GM12878 (cell line): ENCODE measurements at regions of chr1 and their contacts with region 1.

Region 1: DNA sequence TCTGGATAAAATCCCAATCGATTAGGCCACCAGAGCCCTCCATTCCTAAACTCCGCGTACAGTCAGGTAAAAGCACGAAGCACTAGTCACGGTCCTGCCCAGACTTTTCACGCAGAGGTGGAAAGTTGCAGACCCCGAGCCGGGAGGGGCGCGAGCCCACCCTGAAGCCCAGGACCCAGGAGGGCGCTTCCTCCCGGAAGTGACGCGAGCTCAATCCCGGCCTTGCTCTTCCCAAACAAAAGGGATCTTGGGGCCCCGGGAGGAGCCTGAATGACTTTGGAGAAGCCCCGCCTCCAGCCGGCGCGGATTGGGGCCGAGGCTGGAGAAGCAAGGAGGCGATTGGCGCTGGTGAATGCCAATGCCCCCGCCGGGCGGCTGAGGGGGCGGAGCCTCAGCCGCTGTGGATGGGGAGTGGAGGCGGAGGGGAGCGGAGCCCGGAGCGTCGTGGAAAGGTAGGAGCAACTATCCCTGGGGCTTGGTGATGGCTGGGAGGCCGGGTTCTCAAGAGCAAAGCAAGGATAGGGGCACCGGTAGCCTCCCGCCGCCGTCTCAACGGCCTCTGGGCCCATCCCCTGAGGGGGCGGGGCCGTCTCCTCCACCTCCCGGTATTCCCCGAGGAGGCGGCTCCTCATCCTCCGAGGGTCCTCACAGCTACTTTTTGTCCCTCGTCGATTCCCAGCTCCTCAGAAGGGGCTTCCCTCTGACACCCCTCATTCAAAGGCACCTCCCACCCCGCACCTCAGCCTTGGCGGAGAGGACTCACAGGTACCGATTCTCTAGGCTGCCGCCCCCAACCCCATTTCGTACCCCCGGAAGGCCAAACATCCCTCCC is at the start of gene CTTNBP2NL:
- DNase-seq: no peak
- ATAC-seq: peak; percentile 85
- H3K4me3 ChIP-seq: peak within 1 kb of the TSS; percentile 97
- H3K27ac ChIP-seq: peak within 1 kb of the TSS; percentile 78
- H3K4me1 ChIP-seq: peaks cover 18% of the 10 kb centered on the region
- H3K27me3 ChIP-seq: no peaks in the 10 kb centered on the region
- CTCF ChIP-seq: no peak
- EP300 ChIP-seq: no peak
- POLR2A ChIP-seq: peak; percentile 28; the same call in 1 of the 2 replicates
- RAD21 ChIP-seq: no peak
- polyA plus RNA-seq, gene CTTNBP2NL: 2.1 to 5.7 TPM

Region 2: GRCh38 chr1:112196731-112197130 is 199.3 kb before region 1 on chr1:
- CTCF ChIA-PET with region 1: no interaction called
- POLR2A ChIA-PET with region 1: no interaction called
- RAD21 ChIA-PET with region 1: no interaction called
- SMC1A ChIA-PET with region 1: no interaction called
- in situ Hi-C with region 1: no loop called
- intact Hi-C with region 1: no loop called
- DNase-seq: no peak
- ATAC-seq: no peak
- H3K4me3 ChIP-seq: no peak overlapping the region
- H3K27ac ChIP-seq: no peak overlapping the region
- H3K4me1 ChIP-seq: no peaks in the 10 kb centered on the region
- H3K27me3 ChIP-seq: no peaks in the 10 kb centered on the region
- CTCF ChIP-seq: no peak
- EP300 ChIP-seq: no peak
- POLR2A ChIP-seq: no peak
- RAD21 ChIP-seq: no peak

Region 3: DNA sequence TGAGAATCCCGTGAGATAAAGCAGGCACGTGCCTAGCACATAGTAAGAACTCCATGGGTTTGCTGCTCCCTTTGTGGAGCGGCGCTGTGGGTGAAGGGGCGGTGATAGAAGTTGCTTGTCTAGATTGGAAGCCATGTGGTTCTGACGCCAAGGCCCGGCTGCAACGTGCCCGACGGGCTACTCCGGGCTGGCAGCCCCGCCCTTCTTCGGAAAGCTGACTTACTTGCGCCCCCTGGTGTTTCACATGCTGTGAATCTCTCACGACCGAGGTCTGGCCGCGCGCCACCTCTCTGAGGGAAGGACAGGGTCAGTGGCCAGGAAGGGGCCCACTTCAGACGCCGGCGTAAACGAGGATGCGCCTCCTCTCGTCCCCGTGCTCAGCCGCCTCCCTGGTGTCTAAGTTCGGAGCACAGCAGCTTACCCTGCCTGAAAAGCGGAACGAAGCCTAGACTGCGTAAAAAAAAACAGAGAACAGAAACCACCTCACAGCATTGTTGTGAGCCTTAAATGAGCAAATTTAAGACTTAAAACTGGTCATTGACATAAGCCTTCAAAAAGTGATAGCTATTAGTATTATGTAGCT is 70.1 kb after region 1 on chr1:
- CTCF ChIA-PET with region 1: interaction called, 195 read pairs
- POLR2A ChIA-PET with region 1: interaction called, 22 read pairs
- RAD21 ChIA-PET with region 1: interaction called, 46 read pairs
- SMC1A ChIA-PET with region 1: interaction called, 80 read pairs
- in situ Hi-C with region 1: loop called (anchors 5 kb)
- intact Hi-C with region 1: loop called (anchors 1 kb)
- DNase-seq: peak; percentile 95
- ATAC-seq: peak; percentile 99
- H3K4me3 ChIP-seq: no peak overlapping the region
- H3K27ac ChIP-seq: peak overlapping the region; percentile 14
- H3K4me1 ChIP-seq: peaks cover 15% of the 10 kb centered on the region
- H3K27me3 ChIP-seq: no peaks in the 10 kb centered on the region
- CTCF ChIP-seq: peak; percentile 77 to 91 (median 81); a peak in 5 of 6 replicates
- EP300 ChIP-seq: peak; percentile 85 to 94; a peak in 3 of 4 replicates
- POLR2A ChIP-seq: peak; percentile 61
- RAD21 ChIP-seq: peak; percentile 72

Region 4: DNA sequence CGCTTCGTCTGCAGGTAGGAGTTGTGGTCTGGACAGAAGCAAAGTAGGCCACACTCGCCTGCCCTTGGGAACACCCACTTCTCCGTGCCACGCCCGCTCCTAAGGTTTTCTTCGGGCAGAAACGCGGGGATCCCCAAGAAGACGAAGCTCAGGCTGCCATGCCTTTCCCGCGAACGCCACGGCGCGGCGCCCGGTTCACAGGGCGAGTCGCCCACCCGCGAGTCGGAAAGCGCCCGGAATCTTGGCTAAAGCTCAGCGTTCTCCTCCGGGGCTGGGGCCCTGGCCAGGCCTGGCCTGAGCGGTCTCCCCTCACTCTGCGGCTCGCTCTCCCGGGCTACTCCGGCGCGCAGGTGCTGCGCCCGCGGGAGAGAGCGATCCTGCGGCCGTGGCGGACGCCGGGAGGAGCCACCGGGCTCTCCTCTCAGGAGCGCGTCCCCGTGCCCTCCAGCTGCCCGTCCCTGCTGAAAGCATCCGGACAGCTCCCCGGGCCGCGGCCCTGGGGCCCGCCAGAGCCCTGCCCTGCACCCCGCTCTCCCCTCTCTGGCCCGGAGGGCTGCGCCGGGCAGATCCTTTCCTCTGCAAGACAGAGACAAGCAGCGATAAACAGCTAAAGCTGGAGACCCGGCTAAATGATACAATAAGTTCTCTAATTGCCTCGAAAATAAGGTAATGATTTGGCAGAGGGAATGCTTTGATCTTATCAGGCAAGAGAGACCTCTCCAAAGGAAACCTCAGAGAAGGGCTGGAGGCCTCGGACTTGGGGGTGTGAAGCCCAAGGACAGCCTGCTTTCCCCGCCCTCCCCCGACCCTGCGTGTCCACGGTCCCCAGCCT is 106.0 kb after region 1 on chr1:
- CTCF ChIA-PET with region 1: interaction called, 25 read pairs
- POLR2A ChIA-PET with region 1: interaction called, 4 read pairs
- RAD21 ChIA-PET with region 1: interaction called, 25 read pairs
- SMC1A ChIA-PET with region 1: interaction called, 20 read pairs
- in situ Hi-C with region 1: no loop called
- intact Hi-C with region 1: no loop called
- DNase-seq: no peak
- ATAC-seq: peak; percentile 78
- H3K4me3 ChIP-seq: peak overlapping the region; percentile 50; the same call in 1 of the 2 replicates
- H3K27ac ChIP-seq: no peak overlapping the region
- H3K4me1 ChIP-seq: no peaks in the 10 kb centered on the region
- H3K27me3 ChIP-seq: peaks cover 3 to 5% of the 10 kb centered on the region in 2 experiments; a peak in 2 of 4 replicates
- CTCF ChIP-seq: peak; percentile 73 to 89 (median 77)
- EP300 ChIP-seq: no peak
- POLR2A ChIP-seq: no peak
- RAD21 ChIP-seq: peak; percentile 63